T-cell (primary cell): ENCODE measurements at regions of chr15 and their contacts with region 1.

Region 1: GRCh38 chr15:39756806-39757522 is 25.7 kb downstream of the FSIP1 start:
- DNase-seq: peak in 7 of 35 experiments; percentile 4 to 77 (median 16)
- ATAC-seq: peak in 2 of 4 experiments; percentile 30 to 42
- H3K4me3 ChIP-seq: no peak overlapping the region
- H3K4me3 Mint-ChIP-seq: no peak overlapping the region
- H3K27ac ChIP-seq: no peak overlapping the region
- H3K27ac Mint-ChIP-seq: no peak overlapping the region
- H3K4me1 ChIP-seq: no peaks in the 10 kb centered on the region
- H3K4me1 Mint-ChIP-seq: peaks cover 0 to 2% (median 0%) of the 10 kb centered on the region in 3 donors
- H3K27me3 ChIP-seq: no peaks in the 10 kb centered on the region
- H3K27me3 Mint-ChIP-seq: peaks cover 0 to 3% of the 10 kb centered on the region in 2 donors

Region 2: DNA sequence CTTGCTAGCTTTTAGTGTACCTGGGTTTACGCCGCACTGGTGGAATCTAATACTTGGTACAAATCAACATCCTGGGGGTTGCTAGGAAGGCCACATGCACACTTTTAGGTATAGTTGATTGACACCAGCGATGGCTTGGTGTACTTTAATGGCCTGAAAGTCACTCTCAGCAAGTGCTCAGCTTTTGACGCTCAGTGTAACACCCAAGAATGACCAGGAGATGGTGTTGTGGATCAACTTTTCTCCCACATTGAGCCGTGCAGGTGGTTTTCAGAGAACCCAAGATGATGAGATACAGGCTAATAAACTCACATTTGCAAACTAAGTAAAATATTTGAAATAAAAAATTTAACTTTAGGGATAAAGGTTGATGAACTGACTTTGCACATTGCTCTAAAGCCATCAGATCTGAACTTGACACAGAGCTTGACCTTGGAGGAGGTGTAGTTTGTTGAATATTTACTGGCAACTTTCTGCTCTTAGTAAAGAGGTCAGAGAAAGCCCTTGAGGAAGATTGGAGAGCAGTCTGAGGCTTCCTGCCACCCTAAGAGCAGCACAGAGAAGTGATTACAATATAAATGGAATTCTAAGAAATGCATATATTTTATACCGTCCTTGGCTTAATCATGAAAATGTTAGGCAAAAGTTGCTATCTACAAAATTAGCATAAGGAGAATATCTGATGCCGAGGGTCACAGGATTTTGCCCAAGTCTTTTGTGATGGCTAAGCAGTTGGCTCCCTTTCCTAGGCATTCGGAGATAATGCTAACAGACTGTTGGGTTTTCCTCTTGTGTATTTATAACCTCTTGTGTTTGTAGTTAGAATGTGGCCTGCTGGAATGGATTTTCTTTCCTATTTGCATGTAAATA is 1048.9 kb before region 1 on chr15:
- CTCF ChIA-PET with region 1: interaction called, 4 to 12 read pairs
- POLR2A ChIA-PET with region 1: no interaction called
- DNase-seq: peak in 10 of 35 experiments; percentile 10 to 74 (median 22)
- ATAC-seq: peak; percentile 85 to 91 (median 90)
- H3K4me3 ChIP-seq: no peak overlapping the region
- H3K4me3 Mint-ChIP-seq: no peak overlapping the region
- H3K27ac ChIP-seq: no peak overlapping the region
- H3K27ac Mint-ChIP-seq: no peak overlapping the region
- H3K4me1 ChIP-seq: no peaks in the 10 kb centered on the region
- H3K4me1 Mint-ChIP-seq: peaks cover 0 to 5% (median 0%) of the 10 kb centered on the region in 3 donors
- H3K27me3 ChIP-seq: no peaks in the 10 kb centered on the region
- H3K27me3 Mint-ChIP-seq: no peaks in the 10 kb centered on the region

Region 3: DNA sequence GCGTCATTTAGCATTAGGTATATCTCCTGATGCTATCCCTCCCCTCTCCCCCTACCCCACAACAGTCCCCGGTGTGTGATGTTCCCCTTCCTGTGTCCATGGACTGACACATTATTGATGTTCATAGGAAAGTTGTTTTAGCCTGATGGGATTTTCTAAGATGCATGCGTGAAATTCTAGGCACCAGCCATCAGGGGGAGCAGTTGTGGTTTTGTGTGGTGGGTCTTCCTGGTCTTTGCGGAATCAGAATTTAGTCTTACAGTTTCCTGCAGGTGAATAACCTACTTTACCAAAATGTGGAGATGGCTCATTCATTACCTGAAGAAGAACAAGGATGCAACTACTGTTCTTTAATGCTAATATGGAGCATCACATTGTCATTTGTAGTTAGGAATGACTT is 631.1 kb before region 1 on chr15:
- CTCF ChIA-PET with region 1: interaction called in 1 of 2 experiments, 19 read pairs
- POLR2A ChIA-PET with region 1: no interaction called
- DNase-seq: peak in 17 of 35 experiments; percentile 1 to 52 (median 7)
- ATAC-seq: peak in 1 of 4 experiments; percentile 19
- H3K4me3 ChIP-seq: no peak overlapping the region
- H3K4me3 Mint-ChIP-seq: no peak overlapping the region
- H3K27ac ChIP-seq: no peak overlapping the region
- H3K27ac Mint-ChIP-seq: no peak overlapping the region
- H3K4me1 ChIP-seq: no peaks in the 10 kb centered on the region
- H3K4me1 Mint-ChIP-seq: no peaks in the 10 kb centered on the region
- H3K27me3 ChIP-seq: no peaks in the 10 kb centered on the region
- H3K27me3 Mint-ChIP-seq: peaks cover 6 to 13% of the 10 kb centered on the region in 2 donors

Region 4: GRCh38 chr15:39594056-39594763 is 162.8 kb before region 1 on chr15:
- CTCF ChIA-PET with region 1: interaction called in 1 of 2 experiments, 15 read pairs
- POLR2A ChIA-PET with region 1: no interaction called
- DNase-seq: peak in 8 of 35 experiments; percentile 13 to 66 (median 14)
- ATAC-seq: peak in 3 of 4 experiments; percentile 43 to 72 (median 61)
- H3K4me3 ChIP-seq: no peak overlapping the region
- H3K4me3 Mint-ChIP-seq: no peak overlapping the region
- H3K27ac ChIP-seq: no peak overlapping the region
- H3K27ac Mint-ChIP-seq: peak overlapping the region; percentile 29 to 30
- H3K4me1 ChIP-seq: no peaks in the 10 kb centered on the region
- H3K4me1 Mint-ChIP-seq: peaks cover 0 to 7% (median 6%) of the 10 kb centered on the region in 3 donors
- H3K27me3 ChIP-seq: no peaks in the 10 kb centered on the region
- H3K27me3 Mint-ChIP-seq: peaks cover 0 to 7% of the 10 kb centered on the region in 2 donors

Region 5: GRCh38 chr15:39686000-39686613 is 70.9 kb before region 1 on chr15:
- CTCF ChIA-PET with region 1: interaction called, 5 to 33 read pairs
- POLR2A ChIA-PET with region 1: no interaction called
- DNase-seq: peak in 19 of 35 experiments; percentile 0 to 71 (median 11)
- ATAC-seq: peak in 1 of 4 experiments; percentile 35
- H3K4me3 ChIP-seq: no peak overlapping the region
- H3K4me3 Mint-ChIP-seq: no peak overlapping the region
- H3K27ac ChIP-seq: no peak overlapping the region
- H3K27ac Mint-ChIP-seq: no peak overlapping the region
- H3K4me1 ChIP-seq: no peaks in the 10 kb centered on the region
- H3K4me1 Mint-ChIP-seq: peaks cover 0 to 21% (median 8%) of the 10 kb centered on the region in 3 donors
- H3K27me3 ChIP-seq: no peaks in the 10 kb centered on the region
- H3K27me3 Mint-ChIP-seq: no peaks in the 10 kb centered on the region